Activated CD4-positive, alpha-beta T cell treated with anti-CD3 and anti-CD28 coated beads for 36 hours (primary cell): ENCODE measurements at regions of chr9 and their contacts with region 1.

Region 1: DNA sequence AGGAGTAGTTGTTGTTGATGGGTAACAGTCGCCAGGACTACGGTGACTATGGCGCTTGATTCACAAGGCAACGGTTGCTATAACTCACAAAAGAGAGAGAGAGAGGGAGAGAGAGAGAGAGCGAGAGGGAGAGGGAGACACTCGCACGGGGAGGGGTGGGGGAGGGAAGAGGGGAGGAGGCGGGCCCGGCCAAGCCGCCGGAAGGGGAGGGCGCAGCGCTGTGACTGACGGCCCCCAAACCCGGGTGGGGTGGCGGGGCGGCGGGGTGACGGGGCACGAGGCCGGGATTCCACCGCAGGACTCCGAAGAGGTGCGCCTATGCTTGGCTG is at the start of gene RFX3:
- DNase-seq: peak; percentile 96
- ATAC-seq: peak; percentile 63
- H3K4me3 Mint-ChIP-seq: peak within 1 kb of the TSS; percentile 89
- H3K27ac Mint-ChIP-seq: peak within 1 kb of the TSS; percentile 99
- H3K4me1 Mint-ChIP-seq: peaks cover 39% of the 10 kb centered on the region
- H3K27me3 Mint-ChIP-seq: no peaks in the 10 kb centered on the region
- total RNA-seq, gene RFX3: 12.5 to 16.6 TPM

Region 2: DNA sequence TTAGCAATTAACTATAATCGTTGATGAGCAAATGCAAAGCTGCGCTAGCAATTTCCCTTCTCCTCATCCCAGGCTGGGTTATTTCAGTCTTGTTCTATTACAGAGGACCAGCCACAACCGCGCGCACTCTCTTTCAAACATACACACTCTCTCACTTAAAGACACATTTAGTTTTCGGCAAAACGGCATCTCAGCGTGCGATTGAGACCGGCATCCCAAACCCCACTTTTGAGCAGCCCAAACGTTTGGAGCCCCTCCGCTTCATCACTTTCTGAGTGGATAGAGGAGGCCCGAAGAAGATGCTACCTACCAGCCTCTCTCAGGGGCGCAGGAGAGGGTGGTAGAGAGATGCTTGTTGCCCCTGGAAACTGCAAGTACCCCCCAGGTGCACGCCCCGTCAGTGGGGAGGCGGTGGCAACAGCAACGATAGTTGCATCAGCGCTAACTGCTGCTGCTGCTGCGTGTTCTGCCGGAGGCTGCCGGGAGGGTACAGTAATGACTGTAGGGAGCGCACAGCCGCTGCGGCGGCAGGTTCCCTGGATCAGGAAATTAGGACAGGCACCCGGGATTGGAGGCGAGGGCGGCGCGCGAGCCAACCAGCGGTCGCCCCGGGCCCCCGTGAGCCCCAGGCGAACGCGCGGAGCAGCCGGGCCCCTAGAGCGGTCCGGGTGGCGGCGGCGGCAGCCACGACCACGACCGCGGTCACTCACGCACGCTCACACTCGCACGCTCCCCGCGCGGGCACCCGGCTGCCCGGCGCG is 904.7 kb before region 1 on chr9:
- CTCF ChIA-PET with region 1: no interaction called
- POLR2A ChIA-PET with region 1: no interaction called
- intact Hi-C with region 1: loop called in 1 of 2 experiments (anchors 2 kb)
- DNase-seq: peak; percentile 89
- ATAC-seq: peak; percentile 81
- H3K4me3 Mint-ChIP-seq: peak overlapping the region; percentile 90
- H3K27ac Mint-ChIP-seq: peak overlapping the region; percentile 96
- H3K4me1 Mint-ChIP-seq: peaks cover 11% of the 10 kb centered on the region
- H3K27me3 Mint-ChIP-seq: peaks cover 64% of the 10 kb centered on the region

Region 3: GRCh38 chr9:3342159-3342777 is 183.5 kb before region 1 on chr9:
- CTCF ChIA-PET with region 1: no interaction called
- POLR2A ChIA-PET with region 1: no interaction called
- intact Hi-C with region 1: loop called in 1 of 2 experiments (anchors 5 kb)
- DNase-seq: no peak
- ATAC-seq: peak; percentile 86
- H3K4me3 Mint-ChIP-seq: no peak overlapping the region
- H3K27ac Mint-ChIP-seq: peak overlapping the region; percentile 75
- H3K4me1 Mint-ChIP-seq: peaks cover 41% of the 10 kb centered on the region
- H3K27me3 Mint-ChIP-seq: no peaks in the 10 kb centered on the region

Region 4: DNA sequence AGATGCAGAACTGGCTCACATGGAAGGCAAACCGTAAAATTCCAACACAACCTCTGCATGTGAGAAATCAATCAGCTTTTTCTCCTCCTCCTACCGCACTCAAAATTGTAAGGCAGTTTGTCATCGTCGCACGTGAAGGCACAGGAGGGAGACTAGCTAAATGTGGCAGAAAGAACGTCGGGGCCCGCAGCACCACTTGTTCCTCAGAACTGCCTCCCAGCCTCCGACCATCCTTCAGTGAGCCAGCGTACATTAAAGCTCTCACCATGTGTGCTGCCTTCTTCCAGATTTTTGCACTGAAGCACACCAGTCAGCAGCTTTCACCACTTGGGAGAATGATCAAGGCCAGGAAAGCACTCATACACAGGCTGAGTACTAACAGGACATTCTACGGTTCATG is 105.9 kb before region 1 on chr9:
- CTCF ChIA-PET with region 1: no interaction called
- POLR2A ChIA-PET with region 1: no interaction called
- intact Hi-C with region 1: no loop called
- DNase-seq: no peak
- ATAC-seq: no peak
- H3K4me3 Mint-ChIP-seq: no peak overlapping the region
- H3K27ac Mint-ChIP-seq: no peak overlapping the region
- H3K4me1 Mint-ChIP-seq: no peaks in the 10 kb centered on the region
- H3K27me3 Mint-ChIP-seq: no peaks in the 10 kb centered on the region

Region 5: DNA sequence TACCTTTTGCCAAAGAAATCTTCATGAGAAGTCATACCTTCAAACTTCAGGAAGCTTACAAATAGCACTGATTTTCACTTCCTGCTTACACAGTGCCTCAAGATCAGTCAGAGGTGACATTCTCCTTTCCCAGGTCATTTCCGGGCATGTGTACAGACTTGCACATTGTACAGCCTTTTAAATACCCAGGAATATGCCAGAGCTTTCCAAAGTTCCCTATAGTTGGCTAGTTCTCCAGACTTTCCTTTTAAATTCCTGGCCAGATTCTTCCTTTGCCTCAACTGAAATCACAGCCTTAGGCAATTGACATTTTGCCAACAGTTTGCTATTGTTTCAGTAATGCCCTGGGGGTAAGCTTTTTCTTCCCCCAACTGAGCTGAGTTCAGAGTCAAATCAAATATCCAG is 47.2 kb before region 1 on chr9:
- CTCF ChIA-PET with region 1: interaction called, 10 read pairs
- POLR2A ChIA-PET with region 1: interaction called, 21 read pairs
- intact Hi-C with region 1: loop called (anchors 1 kb)
- DNase-seq: peak; percentile 14
- ATAC-seq: peak; percentile 56
- H3K4me3 Mint-ChIP-seq: peak overlapping the region; percentile 19
- H3K27ac Mint-ChIP-seq: peak overlapping the region; percentile 95
- H3K4me1 Mint-ChIP-seq: peaks cover 72% of the 10 kb centered on the region
- H3K27me3 Mint-ChIP-seq: no peaks in the 10 kb centered on the region

Region 6: GRCh38 chr9:3698076-3698475 is 172.3 kb after region 1 on chr9:
- CTCF ChIA-PET with region 1: no interaction called
- POLR2A ChIA-PET with region 1: no interaction called
- intact Hi-C with region 1: no loop called
- DNase-seq: no peak
- ATAC-seq: no peak
- H3K4me3 Mint-ChIP-seq: no peak overlapping the region
- H3K27ac Mint-ChIP-seq: no peak overlapping the region
- H3K4me1 Mint-ChIP-seq: no peaks in the 10 kb centered on the region
- H3K27me3 Mint-ChIP-seq: peaks cover 14% of the 10 kb centered on the region

Region 7: DNA sequence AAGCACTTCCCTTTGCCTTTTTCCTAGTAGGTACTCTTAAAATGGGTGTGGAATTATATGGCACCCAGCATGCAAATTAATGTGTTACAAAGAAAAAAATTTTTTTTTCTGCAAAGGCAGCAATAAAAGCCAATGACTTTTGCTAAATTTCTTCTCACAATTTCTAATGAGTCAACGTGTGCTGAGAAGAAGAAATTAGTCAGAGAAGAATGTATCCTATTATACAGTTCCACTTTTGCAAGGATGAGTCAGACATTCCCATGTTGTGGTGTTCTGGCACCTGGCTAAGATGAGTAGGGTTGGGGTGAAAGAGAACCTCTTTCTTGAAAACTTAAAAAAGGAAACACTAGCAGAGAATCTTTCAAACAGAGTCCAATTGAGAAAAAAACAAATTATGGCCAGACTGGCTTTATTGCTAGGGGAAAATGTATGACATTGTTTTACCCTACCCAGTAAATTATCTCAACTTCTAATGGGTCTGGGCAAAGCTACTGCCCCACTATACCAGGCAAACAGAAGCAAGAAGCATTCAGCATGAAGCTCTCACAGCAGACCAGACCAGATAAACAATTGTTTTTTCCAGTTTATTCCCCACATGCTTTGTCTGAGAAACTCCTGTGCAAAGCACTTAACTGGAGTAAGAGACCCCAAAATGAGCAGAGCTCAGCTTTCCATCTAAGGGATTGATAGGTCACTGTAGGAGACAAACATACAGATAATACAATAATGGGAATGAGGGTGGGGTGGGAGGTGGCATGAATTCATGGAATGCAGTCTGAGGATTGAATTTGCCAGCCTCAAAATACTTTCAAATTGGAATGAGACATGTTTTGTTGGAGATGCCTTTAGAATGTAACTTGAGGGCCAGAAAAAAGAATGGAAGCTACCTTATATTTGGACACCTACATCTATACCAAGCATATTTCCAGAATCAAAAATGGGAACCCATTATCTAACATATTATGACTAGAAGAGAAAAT is 220.8 kb after region 1 on chr9:
- CTCF ChIA-PET with region 1: no interaction called
- POLR2A ChIA-PET with region 1: no interaction called
- intact Hi-C with region 1: loop called in 1 of 2 experiments (anchors 1 kb)
- DNase-seq: peak; percentile 72
- ATAC-seq: peak; percentile 97
- H3K4me3 Mint-ChIP-seq: no peak overlapping the region
- H3K27ac Mint-ChIP-seq: peak overlapping the region; percentile 81
- H3K4me1 Mint-ChIP-seq: peaks cover 32% of the 10 kb centered on the region
- H3K27me3 Mint-ChIP-seq: peaks cover 7% of the 10 kb centered on the region

Region 8: GRCh38 chr9:4792572-4793458 is 1267.0 kb after region 1 on chr9 and contains the start of gene RCL1:
- CTCF ChIA-PET with region 1: no interaction called
- POLR2A ChIA-PET with region 1: no interaction called
- intact Hi-C with region 1: loop called in 1 of 2 experiments (anchors 1 kb)
- DNase-seq: peak; percentile 98
- ATAC-seq: peak; percentile 96
- H3K4me3 Mint-ChIP-seq: peak within 1 kb of the TSS; percentile 97
- H3K27ac Mint-ChIP-seq: peak within 1 kb of the TSS; percentile 89
- H3K4me1 Mint-ChIP-seq: peaks cover 44% of the 10 kb centered on the region
- H3K27me3 Mint-ChIP-seq: no peaks in the 10 kb centered on the region
- total RNA-seq, gene RCL1: 27.0 to 36.4 TPM

Region 9: DNA sequence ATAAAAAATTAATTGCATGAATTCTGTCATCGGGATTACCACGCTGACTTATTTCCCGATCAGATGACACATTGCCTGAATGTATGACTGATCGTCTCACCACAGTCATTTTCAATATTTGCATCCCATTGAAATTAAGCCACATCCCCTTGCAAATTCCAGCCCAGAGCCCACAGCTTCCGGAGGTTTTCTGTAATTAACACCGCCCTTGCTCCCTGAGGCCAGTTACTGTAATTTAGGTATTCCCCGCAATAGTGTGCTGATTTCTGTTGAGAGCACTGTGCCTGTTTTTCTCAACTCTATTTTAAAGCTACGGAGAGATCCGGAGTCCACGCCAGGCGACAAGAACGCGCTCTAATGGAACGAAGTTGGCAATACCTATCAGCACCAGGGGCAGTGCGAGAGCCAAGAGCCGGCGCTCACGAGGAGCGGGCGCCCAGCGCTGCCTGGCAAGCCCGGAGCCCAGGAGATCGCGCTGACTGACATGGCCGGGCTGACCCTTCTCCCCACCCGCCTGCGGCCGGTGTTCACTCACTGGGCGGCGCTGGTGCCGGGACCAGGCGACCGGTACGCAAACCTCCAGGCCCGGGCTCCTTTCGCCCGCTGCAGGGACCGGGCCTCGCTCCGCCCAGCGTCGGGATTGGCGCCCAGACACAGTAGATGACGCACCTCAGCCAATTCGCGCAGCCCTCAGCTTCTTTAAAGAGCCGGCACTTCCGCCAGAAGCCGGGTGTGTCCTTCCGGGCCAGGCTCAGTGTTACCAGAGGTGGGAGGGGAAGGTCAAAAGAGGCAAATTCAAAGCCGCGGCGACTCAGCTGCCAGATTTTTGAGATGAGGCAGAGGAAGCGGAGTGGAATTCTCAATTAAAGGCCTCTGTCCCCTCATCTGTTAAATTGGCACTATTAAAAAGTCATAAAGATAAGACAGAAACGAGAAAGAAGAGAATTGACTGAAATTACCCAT is 1911.7 kb after region 1 on chr9 and contains the start of gene PLGRKT:
- CTCF ChIA-PET with region 1: no interaction called
- POLR2A ChIA-PET with region 1: no interaction called
- intact Hi-C with region 1: loop called in 1 of 2 experiments (anchors 5 kb)
- DNase-seq: peak; percentile 95
- ATAC-seq: peak; percentile 90
- H3K4me3 Mint-ChIP-seq: peak within 1 kb of the TSS; percentile 85
- H3K27ac Mint-ChIP-seq: peak within 1 kb of the TSS; percentile 99
- H3K4me1 Mint-ChIP-seq: peaks cover 55% of the 10 kb centered on the region
- H3K27me3 Mint-ChIP-seq: no peaks in the 10 kb centered on the region
- total RNA-seq, gene PLGRKT: 44.0 to 47.9 TPM